ENCODE measurements at regions of chr17 and their contacts with region 1.

Region 1: DNA sequence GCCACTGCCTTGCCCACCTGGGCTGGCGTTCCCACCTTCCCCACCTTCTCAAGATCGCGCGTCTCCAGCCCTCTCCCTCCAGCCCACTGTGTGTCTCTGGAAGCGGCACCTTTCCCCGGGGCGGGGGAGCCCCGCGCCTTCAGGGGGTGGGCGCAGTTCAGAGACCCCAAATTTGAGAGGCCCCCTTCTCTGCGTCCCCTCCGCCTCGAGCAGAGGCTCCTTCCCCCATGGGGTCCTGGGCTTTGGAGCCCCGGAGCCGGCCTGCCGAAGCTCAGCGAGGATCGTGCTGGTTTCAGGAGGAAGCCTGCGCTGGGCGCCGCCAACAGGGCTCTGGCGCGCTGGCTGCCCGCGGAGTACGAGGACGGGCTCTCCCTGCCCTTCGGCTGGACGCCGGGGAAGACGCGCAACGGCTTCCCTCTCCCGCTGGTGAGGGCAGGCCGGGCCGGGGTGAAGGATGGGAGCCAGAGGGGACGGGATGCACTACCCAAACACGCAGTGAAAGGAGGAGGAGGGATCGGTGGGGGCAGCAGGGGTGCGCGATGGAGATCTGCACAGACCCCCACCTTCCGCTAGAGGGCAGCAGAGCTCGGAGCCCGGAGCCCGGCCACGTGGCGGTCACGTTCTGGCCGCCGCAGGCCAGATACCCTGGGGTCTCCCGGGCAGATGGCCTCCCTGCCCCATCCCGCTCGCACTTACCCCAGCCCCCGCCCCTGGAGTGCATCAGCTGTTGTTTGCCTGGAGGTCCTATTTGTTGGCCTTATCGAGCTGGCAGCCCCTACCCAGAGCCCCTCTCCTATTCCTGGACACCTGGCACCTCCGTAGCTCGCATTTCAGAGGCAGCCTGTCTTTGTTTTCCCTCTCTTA is 11.1 kb downstream of the LPO start:
- DNase-seq: peak; percentile 85
- ATAC-seq: peak; percentile 92
- H3K4me3 Mint-ChIP-seq: peak overlapping the region; percentile 64
- H3K27ac Mint-ChIP-seq: no peak overlapping the region
- H3K4me1 Mint-ChIP-seq: peaks cover 11% of the 10 kb centered on the region
- H3K27me3 Mint-ChIP-seq: peaks cover 27% of the 10 kb centered on the region

Region 2: GRCh38 chr17:58236394-58236793 is 13.1 kb before region 1 on chr17:
- CTCF ChIA-PET with region 1: interaction called, 11 read pairs
- POLR2A ChIA-PET with region 1: interaction called, 4 read pairs
- intact Hi-C with region 1: no loop called
- DNase-seq: no peak
- ATAC-seq: no peak
- H3K4me3 Mint-ChIP-seq: no peak overlapping the region
- H3K27ac Mint-ChIP-seq: no peak overlapping the region
- H3K4me1 Mint-ChIP-seq: peaks cover 9% of the 10 kb centered on the region
- H3K27me3 Mint-ChIP-seq: peaks cover 31% of the 10 kb centered on the region